Dendritic cell treated with granulocyte-macrophage colony-stimulating factor and Interleukin-4, amounts not matched to agents 40 ng/mL and 50 ng/mL, for 4 days (primary cell): ENCODE measurements at regions of chr16 and their contacts with region 1.

Region 1: DNA sequence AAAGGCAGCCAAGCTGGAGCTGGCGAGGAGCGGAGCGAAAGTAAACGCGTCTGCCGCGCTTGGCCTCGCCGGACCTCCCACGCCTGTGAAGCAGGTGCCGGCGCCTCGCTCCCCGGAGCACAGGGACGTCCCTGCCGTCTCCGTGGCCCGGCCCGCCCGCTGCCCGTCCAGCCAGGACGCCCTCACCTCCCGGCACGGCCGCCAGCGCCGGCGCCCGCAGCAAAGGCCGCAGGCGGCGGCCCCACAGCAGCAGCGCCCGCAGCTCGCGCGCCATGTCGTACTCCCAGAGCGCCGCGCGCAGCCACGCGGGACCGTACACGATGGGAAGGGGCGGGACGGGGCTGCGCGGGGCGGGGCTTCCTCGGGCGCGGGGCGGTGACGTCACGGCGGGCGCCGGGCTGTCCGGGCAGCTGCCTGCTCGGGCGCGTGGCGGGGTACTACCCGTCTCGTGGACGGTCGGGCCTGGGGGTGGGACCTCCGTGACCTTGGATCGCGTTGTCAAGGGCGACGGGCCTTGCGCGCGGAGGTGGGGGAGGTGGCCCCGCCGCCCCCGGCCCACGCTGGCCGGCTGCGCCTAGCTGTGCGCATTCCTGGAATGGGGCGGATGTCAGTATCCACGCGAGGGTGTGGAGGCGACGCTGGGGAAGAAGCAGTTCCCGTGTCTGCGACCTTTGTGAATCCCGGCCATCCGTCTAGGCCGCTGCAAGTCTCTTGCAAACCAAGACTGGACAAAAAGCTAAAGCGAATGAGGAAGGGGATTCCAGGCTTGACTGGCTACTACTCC is at the start of gene TRAP1:
- H3K4me3 Mint-ChIP-seq: peak within 1 kb of the TSS; percentile 89
- H3K27ac Mint-ChIP-seq: peak within 1 kb of the TSS; percentile 88
- H3K4me1 Mint-ChIP-seq: peaks cover 52% of the 10 kb centered on the region
- H3K27me3 Mint-ChIP-seq: no peaks in the 10 kb centered on the region

Region 2: GRCh38 chr16:3690470-3690928 is 26.9 kb before region 1 on chr16:
- intact Hi-C with region 1: loop called (anchors 1 kb)
- H3K4me3 Mint-ChIP-seq: peak overlapping the region; percentile 53
- H3K27ac Mint-ChIP-seq: peak overlapping the region; percentile 79
- H3K4me1 Mint-ChIP-seq: peaks cover 24% of the 10 kb centered on the region
- H3K27me3 Mint-ChIP-seq: no peaks in the 10 kb centered on the region